Lower leg skin (tissue), 4 donors: ENCODE measurements at regions of chr19 and their contacts with region 1.

Region 1: GRCh38 chr19:11987405-11988281 is 22.8 kb downstream of the ZNF763 start:
- DNase-seq: peak; percentile 96 to 99
- H3K4me3 ChIP-seq: peak overlapping the region; percentile 57
- CTCF ChIP-seq: no peak
- POLR2A ChIP-seq: peak in 1 of 2 donors; percentile 9

Region 2: GRCh38 chr19:11699931-11700794 is 287.5 kb before region 1 on chr19:
- intact Hi-C with region 1: no loop called
- DNase-seq: no peak
- H3K4me3 ChIP-seq: no peak overlapping the region
- CTCF ChIP-seq: no peak
- POLR2A ChIP-seq: no peak

Region 3: GRCh38 chr19:11798391-11799330 is 189.0 kb before region 1 on chr19 and contains the start of gene ZNF491:
- intact Hi-C with region 1: loop called (anchors 5 kb)
- DNase-seq: peak; percentile 89 to 98
- H3K4me3 ChIP-seq: peak within 1 kb of the TSS; percentile 48
- CTCF ChIP-seq: no peak
- POLR2A ChIP-seq: no peak
- total RNA-seq, gene ZNF491: 0.74 to 2.1 (median 1.3) TPM in 3 of 4 donors, not detected in the other

Region 4: DNA sequence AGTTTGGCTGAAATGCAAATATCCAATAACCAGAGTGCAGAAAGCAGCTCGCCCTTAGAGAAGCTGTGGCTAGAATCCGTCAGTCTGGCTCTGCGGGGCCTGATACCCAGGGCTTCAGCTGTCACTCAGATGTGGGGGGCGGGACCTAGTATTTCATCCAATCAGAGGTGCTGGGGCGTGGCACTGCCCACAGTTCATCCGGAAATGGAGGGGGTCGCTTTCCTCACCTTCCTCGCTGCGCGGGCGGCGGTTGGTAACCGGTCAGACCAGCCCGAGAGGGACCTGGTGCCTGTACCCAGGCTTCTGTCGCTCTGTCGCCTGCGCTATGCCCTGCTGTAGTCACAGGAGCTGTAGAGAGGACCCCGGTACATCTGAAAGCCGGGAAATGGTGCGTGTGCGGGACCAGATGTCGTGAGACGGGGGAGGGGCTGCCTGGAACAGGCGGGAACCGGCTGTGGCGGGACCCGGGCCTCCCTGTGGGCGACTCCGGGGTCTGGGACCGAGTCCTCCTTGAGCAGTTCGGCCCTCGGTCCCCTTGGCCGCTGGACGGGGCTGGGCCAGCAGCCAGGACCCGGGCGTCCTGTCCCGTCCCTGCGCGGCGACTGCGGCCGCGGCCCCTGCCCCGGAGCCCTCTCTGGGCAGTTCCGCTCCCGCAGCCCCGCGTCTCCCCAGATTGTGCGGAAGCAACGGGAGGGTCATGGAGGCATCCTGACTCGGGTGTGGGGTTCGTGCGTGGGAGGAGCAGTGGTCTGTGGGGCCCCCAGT is 62.6 kb before region 1 on chr19 and contains the start of gene ZNF700:
- intact Hi-C with region 1: loop called (anchors 5 kb)
- DNase-seq: peak; percentile 97 to 99
- H3K4me3 ChIP-seq: peak within 1 kb of the TSS; percentile 92
- CTCF ChIP-seq: no peak
- POLR2A ChIP-seq: no peak
- total RNA-seq, gene ZNF700: 11.9 to 19.3 (median 16.4) TPM

Region 5: DNA sequence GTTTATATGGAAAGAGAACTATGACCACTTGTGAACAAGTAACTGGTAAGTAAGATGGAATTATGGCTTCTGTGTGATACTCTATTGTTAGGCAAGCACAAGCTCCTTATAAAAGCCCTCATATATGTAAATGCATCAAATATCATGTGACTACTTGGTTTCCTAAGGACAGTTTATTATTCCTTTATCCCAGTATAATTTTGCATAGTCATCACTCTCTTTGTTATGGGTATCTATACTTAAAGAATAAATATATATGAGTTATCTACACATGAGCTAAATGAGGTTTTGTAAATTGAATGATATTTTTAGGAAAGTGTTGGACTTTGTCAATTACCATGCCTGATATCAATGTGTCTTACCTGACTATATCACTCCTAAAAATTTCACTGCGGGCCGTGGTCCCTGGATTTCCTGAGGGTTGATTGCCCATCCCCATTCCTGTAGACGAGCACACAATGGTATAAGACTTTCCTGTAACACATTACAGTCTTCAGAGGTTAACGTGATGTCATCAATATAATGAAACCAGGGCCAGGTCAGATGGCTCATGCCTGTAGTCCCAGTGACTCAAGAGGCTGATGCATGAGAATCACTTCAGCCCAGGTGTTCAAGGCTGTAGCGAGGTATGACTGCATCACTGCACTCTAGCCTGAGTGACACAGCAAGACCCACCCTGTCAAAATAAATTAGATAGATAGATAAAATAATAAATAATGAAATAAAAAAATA is 97.6 kb after region 1 on chr19:
- intact Hi-C with region 1: no loop called
- DNase-seq: no peak
- H3K4me3 ChIP-seq: no peak overlapping the region
- CTCF ChIP-seq: no peak
- POLR2A ChIP-seq: no peak